Activated T-helper 1 cell treated with anti-CD3 and anti-CD28 coated beads, Interleukin-12 subunit alpha, Interleukin-12 subunit beta, Interleukin-2, Interleukin-4 antibody, amounts not matched to agents 30 ng/mL and 10 ng/mL and 1 ng/mL, durations not matched to agents 14 hours and 24 hours and 36 hours (primary cell): ENCODE measurements at regions of chr4 and their contacts with region 1.

Region 1: GRCh38 chr4:67288964-67289363 is 256.3 kb downstream of the CENPC start:
- DNase-seq: no peak
- H3K4me3 Mint-ChIP-seq: no peak overlapping the region
- H3K27ac Mint-ChIP-seq: no peak overlapping the region
- H3K4me1 Mint-ChIP-seq: no peaks in the 10 kb centered on the region
- H3K27me3 Mint-ChIP-seq: no peaks in the 10 kb centered on the region

Region 2: GRCh38 chr4:67087897-67088296 is 201.1 kb before region 1 on chr4:
- intact Hi-C with region 1: loop called (anchors 1 kb)
- DNase-seq: peak; percentile 12
- H3K4me3 Mint-ChIP-seq: no peak overlapping the region
- H3K27ac Mint-ChIP-seq: no peak overlapping the region
- H3K4me1 Mint-ChIP-seq: no peaks in the 10 kb centered on the region
- H3K27me3 Mint-ChIP-seq: peaks cover 5% of the 10 kb centered on the region